Left colon (tissue), 2 donors: ENCODE measurements at regions of chr9 and their contacts with region 1.

Region 1: GRCh38 chr9:33081128-33081851 is 4.8 kb upstream of the SMU1 start:
- DNase-seq: peak; percentile 44 to 58
- ATAC-seq: peak; percentile 54

Region 2: GRCh38 chr9:32526707-32527048 is 554.6 kb before region 1 on chr9:
- intact Hi-C with region 1: no loop called
- DNase-seq: no peak
- ATAC-seq: no peak

Region 3: DNA sequence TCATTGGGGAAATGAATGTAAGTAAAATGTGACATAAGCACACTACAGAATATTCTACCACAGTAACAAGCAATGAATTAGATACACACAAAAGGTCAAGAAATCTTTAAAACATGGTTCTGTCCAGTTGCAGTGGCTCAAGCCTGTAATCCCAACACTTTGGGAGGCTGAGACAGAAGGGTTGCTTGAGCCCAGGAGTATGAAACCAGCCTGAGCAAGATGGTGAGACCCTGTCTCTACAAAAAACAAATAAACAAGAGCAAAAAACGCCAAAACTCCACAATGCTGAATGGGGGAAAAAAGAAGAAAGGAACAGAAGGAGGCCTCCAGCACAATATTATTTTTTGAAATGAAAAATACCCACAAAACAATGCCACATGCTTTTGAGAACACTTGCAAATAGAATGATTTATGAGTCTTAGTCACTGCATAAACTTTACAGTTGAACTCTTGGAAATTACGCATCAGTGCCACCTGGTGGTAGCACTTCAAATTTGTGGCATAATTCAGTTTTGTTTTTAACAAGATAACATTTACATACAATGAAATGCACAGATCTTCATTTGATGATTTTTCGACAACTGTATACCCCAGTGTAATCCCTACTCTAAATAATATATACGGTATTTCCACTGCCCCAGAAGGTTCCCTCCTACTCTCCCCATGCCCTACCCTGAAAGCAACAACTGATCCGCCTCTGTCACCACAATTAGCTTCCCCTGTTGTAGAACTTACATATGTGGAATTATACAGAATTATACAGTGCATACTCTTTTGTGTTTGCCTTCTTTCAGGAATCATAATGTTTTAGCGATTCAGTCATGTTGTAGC is 144.2 kb after region 1 on chr9:
- intact Hi-C with region 1: loop called (anchors 2 to 5 kb)
- DNase-seq: peak in 1 of 2 donors; percentile 77
- ATAC-seq: peak; percentile 16